MCF 10A (cell line): ENCODE measurements at regions of chr19 and their contacts with region 1.

Region 1: GRCh38 chr19:43519436-43520088 is 7.4 kb downstream of the ETHE1 start:
- DNase-seq: peak; percentile 92
- H3K4me3 Mint-ChIP-seq: peak overlapping the region; percentile 19
- H3K27ac Mint-ChIP-seq: no peak overlapping the region
- H3K4me1 Mint-ChIP-seq: peaks cover 16% of the 10 kb centered on the region
- H3K27me3 Mint-ChIP-seq: no peaks in the 10 kb centered on the region
- CTCF ChIP-seq: peak; percentile 84

Region 2: GRCh38 chr19:43433358-43433673 is 86.2 kb before region 1 on chr19:
- CTCF ChIA-PET with region 1: interaction called, 23 read pairs
- POLR2A ChIA-PET with region 1: interaction called, 5 read pairs
- intact Hi-C with region 1: loop called (anchors 1 kb)
- DNase-seq: no peak
- H3K4me3 Mint-ChIP-seq: no peak overlapping the region
- H3K27ac Mint-ChIP-seq: no peak overlapping the region
- H3K4me1 Mint-ChIP-seq: peaks cover 2% of the 10 kb centered on the region
- H3K27me3 Mint-ChIP-seq: no peaks in the 10 kb centered on the region
- CTCF ChIP-seq: no peak

Region 3: DNA sequence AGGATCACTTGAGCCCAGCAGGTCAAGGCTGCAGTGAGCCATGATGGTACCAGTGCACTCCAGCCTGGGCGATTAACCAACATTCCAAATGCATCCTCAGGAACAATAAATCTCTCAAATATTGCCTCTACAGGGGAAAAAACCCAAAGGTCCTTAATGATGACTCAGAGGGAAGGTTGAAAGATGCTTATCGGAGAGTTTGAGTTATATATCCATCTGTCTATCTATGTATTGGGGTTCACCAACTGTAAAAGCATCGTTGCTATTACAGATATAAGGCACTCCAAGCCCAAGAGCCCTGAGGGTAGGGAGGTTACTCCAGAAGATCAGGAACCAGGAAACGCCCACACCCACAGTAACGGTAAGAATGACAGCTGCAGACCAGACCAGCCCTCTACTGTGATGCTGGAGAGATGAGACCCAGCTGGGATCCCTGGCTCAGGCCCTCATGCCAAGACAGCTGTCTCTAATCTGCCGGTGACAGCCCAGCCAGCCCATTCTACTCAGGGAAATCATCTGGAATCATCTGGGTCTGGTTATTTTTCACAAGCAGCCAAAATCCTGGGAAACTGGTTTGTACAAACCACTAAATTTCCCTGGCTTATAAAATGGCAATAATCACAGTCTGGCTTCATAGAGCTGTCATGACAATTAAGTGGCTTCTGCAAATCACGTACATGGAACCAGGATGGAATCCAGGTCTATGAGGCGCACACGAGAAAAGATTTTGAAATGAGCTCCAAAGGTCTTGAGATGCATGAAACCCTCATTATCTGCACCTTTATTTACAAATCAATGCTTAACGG is 81.1 kb before region 1 on chr19:
- CTCF ChIA-PET with region 1: interaction called, 261 read pairs
- POLR2A ChIA-PET with region 1: interaction called, 5 read pairs
- intact Hi-C with region 1: loop called (anchors 1 kb)
- DNase-seq: peak; percentile 21
- H3K4me3 Mint-ChIP-seq: no peak overlapping the region
- H3K27ac Mint-ChIP-seq: peak overlapping the region; percentile 19
- H3K4me1 Mint-ChIP-seq: peaks cover 11% of the 10 kb centered on the region
- H3K27me3 Mint-ChIP-seq: no peaks in the 10 kb centered on the region
- CTCF ChIP-seq: no peak

Region 4: DNA sequence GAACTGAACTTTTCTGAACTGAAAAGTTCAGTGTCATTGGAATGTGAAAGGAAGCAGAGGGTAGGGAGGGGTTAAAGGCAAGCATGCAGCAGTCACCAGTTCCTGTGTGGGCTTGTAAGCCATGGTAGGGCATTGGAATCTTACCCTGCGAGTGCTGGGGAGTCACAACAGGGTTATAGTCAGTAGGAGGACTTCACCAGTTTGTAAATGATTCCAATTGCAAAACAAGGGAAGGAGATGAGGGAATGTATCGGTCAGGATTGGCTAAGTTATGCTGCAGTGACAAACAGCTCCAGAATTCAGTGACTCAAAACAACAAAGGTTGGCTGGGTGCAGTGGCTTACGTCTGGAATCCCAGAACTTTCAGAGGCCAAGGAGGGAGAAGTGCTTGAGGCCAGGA is 67.0 kb before region 1 on chr19:
- CTCF ChIA-PET with region 1: interaction called, 261 read pairs
- POLR2A ChIA-PET with region 1: interaction called, 39 read pairs
- intact Hi-C with region 1: loop called (anchors 1 kb)
- DNase-seq: no peak
- H3K4me3 Mint-ChIP-seq: no peak overlapping the region
- H3K27ac Mint-ChIP-seq: no peak overlapping the region
- H3K4me1 Mint-ChIP-seq: peaks cover 21% of the 10 kb centered on the region
- H3K27me3 Mint-ChIP-seq: no peaks in the 10 kb centered on the region
- CTCF ChIP-seq: no peak

Region 5: DNA sequence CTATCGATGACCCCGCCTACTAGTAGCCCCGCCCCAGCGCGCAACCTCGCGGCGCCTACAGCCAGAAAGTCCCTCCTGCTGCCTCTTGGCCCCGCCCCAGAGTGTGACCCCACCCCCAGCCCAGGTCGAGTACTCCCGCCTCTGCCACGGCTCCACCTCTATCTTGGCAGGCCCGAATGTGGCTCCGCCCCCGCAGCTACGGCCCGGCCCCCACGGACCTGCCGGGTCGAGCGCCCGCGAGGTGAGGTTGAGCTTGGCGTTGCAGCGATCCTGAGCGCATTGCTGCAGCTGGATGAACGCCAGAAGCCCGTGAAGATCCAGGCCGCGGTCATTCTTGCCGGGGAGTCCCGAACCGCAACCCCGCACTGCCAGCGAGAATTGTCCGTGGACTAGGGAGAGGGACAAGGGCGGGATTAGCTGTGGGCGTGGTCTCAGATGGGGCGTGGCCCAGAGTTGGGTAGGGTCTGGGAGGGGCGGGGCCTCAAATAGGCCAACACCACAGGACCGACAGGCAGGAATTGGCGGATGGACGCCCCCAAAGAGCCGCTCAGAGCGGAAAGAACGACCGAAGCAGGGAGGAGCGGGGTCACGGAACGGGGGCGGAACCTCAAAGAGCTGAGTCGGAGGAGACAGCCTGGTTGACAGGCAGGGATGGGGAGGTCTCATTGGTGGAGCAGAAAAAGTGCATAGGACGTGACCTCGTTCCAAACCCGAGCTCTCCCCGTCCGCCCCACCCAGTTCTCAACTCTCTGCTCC is 56.0 kb before region 1 on chr19:
- CTCF ChIA-PET with region 1: interaction called, 17 read pairs
- POLR2A ChIA-PET with region 1: interaction called, 14 read pairs
- intact Hi-C with region 1: no loop called
- DNase-seq: peak; percentile 97
- H3K4me3 Mint-ChIP-seq: peak overlapping the region; percentile 88
- H3K27ac Mint-ChIP-seq: peak overlapping the region; percentile 80
- H3K4me1 Mint-ChIP-seq: peaks cover 45% of the 10 kb centered on the region
- H3K27me3 Mint-ChIP-seq: no peaks in the 10 kb centered on the region
- CTCF ChIP-seq: no peak

Region 6: GRCh38 chr19:43532962-43533545 is 13.5 kb after region 1 on chr19 and contains the start of gene ZNF575:
- CTCF ChIA-PET with region 1: interaction called, 14 read pairs
- POLR2A ChIA-PET with region 1: interaction called, 11 read pairs
- intact Hi-C with region 1: no loop called
- DNase-seq: peak; percentile 92
- H3K4me3 Mint-ChIP-seq: peak within 1 kb of the TSS; percentile 78
- H3K27ac Mint-ChIP-seq: peak within 1 kb of the TSS; percentile 3
- H3K4me1 Mint-ChIP-seq: peaks cover 8% of the 10 kb centered on the region
- H3K27me3 Mint-ChIP-seq: no peaks in the 10 kb centered on the region
- CTCF ChIP-seq: no peak
- total RNA-seq, gene ZNF575: 0.81 and 1.1 TPM in 2 replicates